ENCODE measurements at regions of chr3 and their contacts with region 1.

Region 1: DNA sequence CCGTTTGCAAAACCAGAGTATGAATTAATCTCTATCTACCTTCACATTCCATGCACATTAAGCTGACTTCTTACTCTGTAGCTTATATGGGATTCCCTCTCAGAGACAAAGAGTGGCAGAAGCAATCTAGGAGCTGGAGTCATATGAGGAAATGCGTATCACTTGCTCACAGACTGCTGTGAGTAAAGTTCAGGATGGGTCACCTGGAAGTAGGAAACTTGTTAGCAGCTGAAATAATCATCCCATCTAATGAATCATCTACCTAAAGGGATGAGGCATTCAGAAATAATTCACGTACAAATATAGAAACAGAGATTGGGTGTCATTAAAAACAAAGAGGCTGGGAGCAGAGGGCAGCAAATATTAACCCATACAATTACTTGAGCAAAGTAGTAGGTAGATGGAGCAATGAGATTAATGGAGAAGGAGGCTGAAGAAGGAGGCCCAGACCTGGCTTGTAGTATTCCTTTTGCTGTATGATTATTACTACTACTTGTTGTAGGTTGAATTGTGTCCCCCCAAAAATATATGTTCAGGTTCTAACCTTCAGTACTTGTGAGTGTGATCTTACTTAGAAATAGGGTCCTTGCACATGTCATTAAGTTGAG is 866.3 kb downstream of the ROBO2 start:
- DNase-seq: peak; percentile 35 to 85
- H3K4me3 ChIP-seq: no peak overlapping the region
- H3K27ac ChIP-seq: peak overlapping the region; percentile 66
- H3K4me1 ChIP-seq: peaks cover 9% of the 10 kb centered on the region; the same call in 1 of the 2 replicates
- H3K27me3 ChIP-seq: no peaks in the 10 kb centered on the region
- CTCF ChIP-seq: no peak

Region 2: DNA sequence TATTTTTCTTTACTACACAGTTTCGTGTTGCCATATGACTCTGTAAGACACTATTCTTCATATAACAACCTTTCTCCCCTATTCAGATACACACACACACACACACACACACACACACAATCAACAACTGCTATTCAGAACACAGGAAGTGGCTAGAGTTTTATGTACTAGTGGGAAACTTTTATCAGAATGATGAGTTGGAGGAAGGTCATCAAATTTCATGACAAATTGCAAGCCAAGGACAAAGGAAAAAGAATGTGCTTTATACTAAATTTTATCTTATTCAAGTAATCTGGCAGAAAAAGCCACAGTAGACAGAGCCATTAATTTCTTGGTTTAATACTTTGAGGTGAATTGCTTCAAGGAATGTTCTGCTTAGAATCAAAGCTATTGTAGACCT is 33.5 kb after region 1 on chr3:
- CTCF ChIA-PET with region 1: no interaction called
- POLR2A ChIA-PET with region 1: no interaction called
- intact Hi-C with region 1: loop called (anchors 2 kb)
- DNase-seq: no peak
- H3K4me3 ChIP-seq: no peak overlapping the region
- H3K27ac ChIP-seq: no peak overlapping the region
- H3K4me1 ChIP-seq: no peaks in the 10 kb centered on the region
- H3K27me3 ChIP-seq: no peaks in the 10 kb centered on the region
- CTCF ChIP-seq: no peak

Region 3: GRCh38 chr3:78140866-78141658 is 234.9 kb after region 1 on chr3:
- CTCF ChIA-PET with region 1: no interaction called
- POLR2A ChIA-PET with region 1: no interaction called
- intact Hi-C with region 1: loop called (anchors 5 kb)
- DNase-seq: peak in 1 of 2 experiments; percentile 21
- H3K4me3 ChIP-seq: no peak overlapping the region
- H3K27ac ChIP-seq: no peak overlapping the region
- H3K4me1 ChIP-seq: no peaks in the 10 kb centered on the region
- H3K27me3 ChIP-seq: no peaks in the 10 kb centered on the region
- CTCF ChIP-seq: no peak

Region 4: GRCh38 chr3:78506581-78507195 is 600.5 kb after region 1 on chr3:
- CTCF ChIA-PET with region 1: no interaction called
- POLR2A ChIA-PET with region 1: no interaction called
- intact Hi-C with region 1: loop called (anchors 1 kb)
- DNase-seq: peak; percentile 58 to 80
- H3K4me3 ChIP-seq: no peak overlapping the region
- H3K27ac ChIP-seq: peak overlapping the region; percentile 35; the same call in 1 of the 2 replicates
- H3K4me1 ChIP-seq: peaks cover 10% of the 10 kb centered on the region; the same call in 1 of the 2 replicates
- H3K27me3 ChIP-seq: no peaks in the 10 kb centered on the region
- CTCF ChIP-seq: no peak

Region 5: GRCh38 chr3:78818146-78818985 is 912.2 kb after region 1 on chr3:
- CTCF ChIA-PET with region 1: no interaction called
- POLR2A ChIA-PET with region 1: no interaction called
- intact Hi-C with region 1: no loop called
- DNase-seq: no peak
- H3K4me3 ChIP-seq: no peak overlapping the region
- H3K27ac ChIP-seq: no peak overlapping the region
- H3K4me1 ChIP-seq: peaks cover 7% of the 10 kb centered on the region
- H3K27me3 ChIP-seq: no peaks in the 10 kb centered on the region
- CTCF ChIP-seq: no peak